ENCODE measurements at regions of chr4 and their contacts with region 1.

Region 1: GRCh38 chr4:138242076-138242833 is at the start of gene SLC7A11:
- DNase-seq: peak; percentile 58 to 73
- H3K4me3 ChIP-seq: peak within 1 kb of the TSS; percentile 71 to 86 (median 74)
- H3K27ac ChIP-seq: peak within 1 kb of the TSS; percentile 64
- H3K4me1 ChIP-seq: peaks cover 0 to 7% (median 2%) of the 10 kb centered on the region in 4 experiments; a peak in 2 of 7 replicates
- H3K27me3 ChIP-seq: no peaks in the 10 kb centered on the region
- CTCF ChIP-seq: no peak
- EP300 ChIP-seq: peak in 1 of 2 experiments; percentile 92; a peak in 2 of 3 replicates
- POLR2A ChIP-seq: peak; percentile 88 to 95
- RAD21 ChIP-seq: no peak
- total RNA-seq, gene SLC7A11: 15.6 and 17.0 TPM in 2 replicates

Region 2: GRCh38 chr4:137853435-137853834 is 388.8 kb before region 1 on chr4:
- CTCF ChIA-PET with region 1: no interaction called
- POLR2A ChIA-PET with region 1: no interaction called
- DNase-seq: no peak
- H3K4me3 ChIP-seq: no peak overlapping the region
- H3K27ac ChIP-seq: no peak overlapping the region
- H3K4me1 ChIP-seq: no peaks in the 10 kb centered on the region
- H3K27me3 ChIP-seq: no peaks in the 10 kb centered on the region
- CTCF ChIP-seq: no peak
- EP300 ChIP-seq: no peak
- POLR2A ChIP-seq: no peak
- RAD21 ChIP-seq: no peak

Region 3: DNA sequence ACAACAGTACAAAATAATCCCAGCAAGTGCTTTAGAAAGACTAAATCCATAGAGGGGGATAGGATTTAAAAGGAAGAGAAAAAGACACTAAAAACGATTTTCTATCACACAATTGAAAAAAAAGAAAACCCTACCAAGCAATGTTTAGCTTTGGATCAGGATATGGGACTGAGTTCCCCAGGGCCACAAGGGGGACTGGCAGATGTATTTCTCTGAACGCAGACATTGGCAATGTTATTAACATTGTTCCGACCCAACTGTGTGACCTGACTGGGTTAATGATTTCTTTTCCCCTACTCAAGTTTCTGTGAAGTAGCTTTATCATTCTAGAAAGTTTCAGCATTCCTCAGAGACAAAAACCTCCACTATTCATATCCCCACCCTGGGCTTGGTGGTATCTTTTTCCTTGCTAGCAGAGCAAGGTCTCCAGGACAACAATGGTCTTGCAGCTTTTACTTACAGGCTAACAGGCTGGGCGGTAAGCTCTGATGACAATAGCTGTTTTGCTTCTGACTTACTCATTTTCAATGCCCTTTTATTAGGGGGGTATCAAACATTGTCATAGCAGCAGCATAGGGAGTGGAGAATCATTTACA is 25.9 kb before region 1 on chr4:
- CTCF ChIA-PET with region 1: no interaction called
- POLR2A ChIA-PET with region 1: interaction called, 10 read pairs
- DNase-seq: no peak
- H3K4me3 ChIP-seq: no peak overlapping the region
- H3K27ac ChIP-seq: no peak overlapping the region
- H3K4me1 ChIP-seq: peaks cover 0 to 7% (median 3%) of the 10 kb centered on the region in 4 experiments; a peak in 4 of 7 replicates
- H3K27me3 ChIP-seq: no peaks in the 10 kb centered on the region
- CTCF ChIP-seq: 0 out of 4 replicates have a peak, but pooled peaks of 1 of the 3 experiments have one; percentile 7
- EP300 ChIP-seq: no peak
- POLR2A ChIP-seq: no peak
- RAD21 ChIP-seq: 0 out of 4 replicates have a peak, but pooled peaks of 1 of the 2 experiments have one; percentile 5

Region 4: GRCh38 chr4:138225477-138225876 is 16.8 kb before region 1 on chr4:
- CTCF ChIA-PET with region 1: no interaction called
- POLR2A ChIA-PET with region 1: interaction called, 90 read pairs
- DNase-seq: no peak
- H3K4me3 ChIP-seq: 0 out of 8 replicates have a peak overlapping the region, but pooled peaks of 1 of the 4 experiments have one; percentile 11
- H3K27ac ChIP-seq: no peak overlapping the region
- H3K4me1 ChIP-seq: peaks cover 2 to 30% (median 15%) of the 10 kb centered on the region in 4 experiments; a peak in 6 of 7 replicates
- H3K27me3 ChIP-seq: no peaks in the 10 kb centered on the region
- CTCF ChIP-seq: no peak
- EP300 ChIP-seq: no peak
- POLR2A ChIP-seq: no peak
- RAD21 ChIP-seq: no peak

Measured in H1 (cell line).